Thyroid gland (tissue), 4 donors: ENCODE measurements at regions of chr5 and their contacts with region 1.

Region 1: DNA sequence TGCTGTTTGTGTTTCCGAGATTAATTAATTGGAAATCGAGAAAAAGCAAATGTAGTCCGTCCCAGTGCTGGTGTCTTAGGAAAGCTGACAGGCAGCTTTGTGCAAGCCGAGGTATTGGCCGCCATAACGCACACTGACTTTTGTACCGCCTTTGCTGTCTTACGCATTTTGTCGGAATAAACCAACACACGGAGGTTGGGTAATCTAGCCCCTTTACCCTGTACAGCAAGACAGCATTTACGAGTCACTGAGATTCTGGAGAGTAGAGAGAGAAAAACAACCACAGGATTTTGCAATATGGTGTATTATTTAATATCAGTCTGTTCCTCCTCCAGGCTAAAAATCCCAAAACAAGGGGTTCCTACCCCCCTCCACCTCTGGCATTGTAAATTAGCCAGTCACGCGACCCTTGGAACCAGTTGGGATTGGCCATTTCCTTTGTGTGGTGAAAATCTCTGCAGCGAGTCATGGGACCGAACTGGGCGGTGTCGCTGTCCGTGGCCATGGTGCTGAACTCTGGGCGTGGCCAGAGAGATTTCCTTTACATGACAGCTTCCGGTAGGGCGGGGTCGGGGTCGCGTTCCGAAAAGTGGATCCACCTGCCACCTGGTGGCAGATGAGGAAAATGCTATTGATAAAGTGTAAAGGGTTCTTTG is 10.3 kb upstream of the PCDHB1 start:
- DNase-seq: peak; percentile 97
- H3K4me3 ChIP-seq: peak overlapping the region in 2 of 3 donors; percentile 17 to 71
- H3K27ac ChIP-seq: peak overlapping the region; percentile 75 to 80 (median 80)
- H3K4me1 ChIP-seq: no peaks in the 10 kb centered on the region
- H3K27me3 ChIP-seq: no peaks in the 10 kb centered on the region
- CTCF ChIP-seq: peak; percentile 57 to 94 (median 79)
- POLR2A ChIP-seq: peak; percentile 69 to 85

Region 2: DNA sequence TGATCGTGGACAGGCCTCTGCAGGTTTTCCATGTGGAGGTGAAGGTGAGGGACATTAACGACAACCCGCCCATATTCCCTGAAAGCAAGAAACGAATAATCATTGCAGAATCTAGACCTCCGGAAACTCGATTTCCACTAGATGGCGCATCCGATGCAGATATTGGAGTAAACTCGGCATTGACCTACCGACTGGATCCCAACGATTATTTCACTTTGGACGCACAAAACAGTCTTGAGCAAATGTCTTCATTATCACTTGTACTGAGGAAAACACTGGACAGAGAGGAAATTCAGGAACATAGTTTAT is 158.4 kb before region 1 on chr5:
- intact Hi-C with region 1: loop called (anchors 5 kb)
- DNase-seq: peak; percentile 18 to 24
- H3K4me3 ChIP-seq: no peak overlapping the region
- H3K27ac ChIP-seq: no peak overlapping the region
- H3K4me1 ChIP-seq: no peaks in the 10 kb centered on the region
- H3K27me3 ChIP-seq: no peaks in the 10 kb centered on the region
- CTCF ChIP-seq: peak in 4 of 6 experiments; percentile 10 to 38 (median 31)
- POLR2A ChIP-seq: no peak

Region 3: GRCh38 chr5:140926443-140927227 is 114.3 kb before region 1 on chr5:
- intact Hi-C with region 1: loop called (anchors 5 kb)
- DNase-seq: peak; percentile 88 to 91
- H3K4me3 ChIP-seq: peak overlapping the region; percentile 41 to 56 (median 43)
- H3K27ac ChIP-seq: peak overlapping the region in 2 of 3 donors; percentile 42 to 49
- H3K4me1 ChIP-seq: peaks cover 6 to 10% of the 10 kb centered on the region in 2 donors
- H3K27me3 ChIP-seq: no peaks in the 10 kb centered on the region
- CTCF ChIP-seq: peak; percentile 56 to 90 (median 84)
- POLR2A ChIP-seq: no peak